ENCODE measurements at regions of chr17 and their contacts with region 1.

Region 1: GRCh38 chr17:28763804-28764266 is 20.0 kb downstream of the TRAF4 start:
- DNase-seq: no peak
- ATAC-seq: peak; percentile 86
- H3K4me3 Mint-ChIP-seq: no peak overlapping the region
- H3K27ac Mint-ChIP-seq: no peak overlapping the region
- H3K4me1 Mint-ChIP-seq: peaks cover 10% of the 10 kb centered on the region
- H3K27me3 Mint-ChIP-seq: no peaks in the 10 kb centered on the region
- CTCF ChIP-seq: peak; percentile 80

Region 2: GRCh38 chr17:28750178-28751047 is 13.4 kb before region 1 on chr17:
- CTCF ChIA-PET with region 1: interaction called, 23 read pairs
- POLR2A ChIA-PET with region 1: interaction called, 30 read pairs
- intact Hi-C with region 1: no loop called
- DNase-seq: peak; percentile 82
- ATAC-seq: peak; percentile 84
- H3K4me3 Mint-ChIP-seq: peak overlapping the region; percentile 75
- H3K27ac Mint-ChIP-seq: peak overlapping the region; percentile 74
- H3K4me1 Mint-ChIP-seq: peaks cover 51% of the 10 kb centered on the region
- H3K27me3 Mint-ChIP-seq: no peaks in the 10 kb centered on the region
- CTCF ChIP-seq: peak; percentile 95

Region 3: DNA sequence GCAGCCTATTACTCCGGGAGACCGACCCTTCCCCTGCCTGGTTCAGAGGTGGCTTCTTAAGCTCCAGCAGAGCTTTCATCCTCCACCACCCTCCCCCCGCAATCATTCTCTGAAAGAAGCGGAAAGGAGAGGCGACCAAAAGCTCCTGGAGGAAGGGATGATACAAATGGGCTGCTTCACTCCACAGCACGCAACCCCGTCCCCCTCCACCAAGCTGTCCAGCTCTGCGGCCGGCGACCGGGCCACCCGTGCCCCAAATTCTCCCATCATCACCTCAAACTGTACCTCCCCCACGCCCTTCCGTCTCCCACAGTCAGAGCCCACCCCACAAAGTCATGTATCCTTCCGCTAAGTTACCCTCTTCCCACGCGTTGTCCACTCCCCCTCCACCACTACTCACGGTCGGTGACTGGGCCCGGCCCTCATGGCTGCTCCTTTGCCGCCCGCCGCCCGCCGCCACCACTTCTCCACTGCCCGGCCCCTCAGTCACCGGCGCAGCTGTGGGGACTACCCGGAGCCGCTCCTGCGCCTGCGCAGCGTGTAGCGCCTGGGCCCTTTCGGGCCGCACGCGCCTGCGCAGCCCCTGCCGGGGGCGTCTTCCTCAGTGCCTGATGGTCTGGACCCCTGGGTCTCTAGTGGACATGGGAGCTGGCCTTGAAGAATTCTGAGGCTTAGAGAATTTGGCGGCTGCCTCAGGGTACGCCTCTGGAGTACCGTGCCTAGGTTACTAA is 78.6 kb after region 1 on chr17 and contains the start of gene FAM222B:
- CTCF ChIA-PET with region 1: interaction called, 17 read pairs
- POLR2A ChIA-PET with region 1: interaction called, 3 read pairs
- intact Hi-C with region 1: loop called (anchors 2 kb)
- DNase-seq: peak; percentile 84
- ATAC-seq: peak; percentile 98
- H3K4me3 Mint-ChIP-seq: peak within 1 kb of the TSS; percentile 96
- H3K27ac Mint-ChIP-seq: peak within 1 kb of the TSS; percentile 91
- H3K4me1 Mint-ChIP-seq: peaks cover 24% of the 10 kb centered on the region
- H3K27me3 Mint-ChIP-seq: no peaks in the 10 kb centered on the region
- CTCF ChIP-seq: no peak
- total RNA-seq, gene FAM222B: 15.6 and 16.0 TPM in 2 replicates

Region 4: GRCh38 chr17:28896884-28897768 is 133.3 kb after region 1 on chr17 and contains the start of gene FLOT2:
- CTCF ChIA-PET with region 1: interaction called, 90 read pairs
- POLR2A ChIA-PET with region 1: interaction called, 13 read pairs
- intact Hi-C with region 1: no loop called
- DNase-seq: peak; percentile 66
- ATAC-seq: peak; percentile 58
- H3K4me3 Mint-ChIP-seq: peak within 1 kb of the TSS; percentile 96
- H3K27ac Mint-ChIP-seq: peak within 1 kb of the TSS; percentile 86
- H3K4me1 Mint-ChIP-seq: peaks cover 81% of the 10 kb centered on the region
- H3K27me3 Mint-ChIP-seq: no peaks in the 10 kb centered on the region
- CTCF ChIP-seq: no peak
- total RNA-seq, gene FLOT2: 303 and 321 TPM in 2 replicates

Region 5: DNA sequence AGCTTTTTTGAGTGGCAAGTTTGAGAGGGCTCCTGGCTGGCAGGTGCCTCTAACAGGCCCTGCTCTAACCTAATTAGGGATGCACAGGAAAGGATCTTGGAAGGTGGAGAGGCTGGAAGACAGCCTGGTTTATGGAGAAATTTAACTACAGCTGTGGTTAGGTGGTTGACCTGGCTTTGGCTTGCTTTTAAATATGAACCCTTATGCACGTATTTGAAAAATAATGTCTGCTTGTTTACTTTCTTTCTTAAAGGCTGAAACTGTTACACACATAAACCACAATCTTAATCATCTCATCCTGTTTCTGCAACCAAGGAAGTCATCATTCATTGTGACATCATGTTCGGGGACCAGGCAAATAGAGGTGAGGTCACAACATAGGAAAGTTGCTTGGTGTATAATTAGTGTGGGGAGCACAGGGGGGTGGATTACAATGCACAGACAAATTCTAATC is 162.1 kb after region 1 on chr17:
- CTCF ChIA-PET with region 1: interaction called, 10 read pairs
- POLR2A ChIA-PET with region 1: no interaction called
- intact Hi-C with region 1: no loop called
- DNase-seq: no peak
- ATAC-seq: peak; percentile 72
- H3K4me3 Mint-ChIP-seq: peak overlapping the region; percentile 13
- H3K27ac Mint-ChIP-seq: peak overlapping the region; percentile 65
- H3K4me1 Mint-ChIP-seq: peaks cover 50% of the 10 kb centered on the region
- H3K27me3 Mint-ChIP-seq: no peaks in the 10 kb centered on the region
- CTCF ChIP-seq: no peak

Region 6: GRCh38 chr17:29579866-29580771 is 816.3 kb after region 1 on chr17:
- CTCF ChIA-PET with region 1: no interaction called
- POLR2A ChIA-PET with region 1: no interaction called
- intact Hi-C with region 1: no loop called
- DNase-seq: peak; percentile 82
- ATAC-seq: peak; percentile 98
- H3K4me3 Mint-ChIP-seq: no peak overlapping the region
- H3K27ac Mint-ChIP-seq: peak overlapping the region; percentile 71
- H3K4me1 Mint-ChIP-seq: peaks cover 27% of the 10 kb centered on the region
- H3K27me3 Mint-ChIP-seq: no peaks in the 10 kb centered on the region
- CTCF ChIP-seq: no peak

Measured in activated B cell treated with CpG ODN at 0.5 μM for 24 hours (primary cell).